Dorsolateral prefrontal cortex (tissue), 120 donors: ENCODE measurements at regions of chr7 and their contacts with region 1.

Region 1: DNA sequence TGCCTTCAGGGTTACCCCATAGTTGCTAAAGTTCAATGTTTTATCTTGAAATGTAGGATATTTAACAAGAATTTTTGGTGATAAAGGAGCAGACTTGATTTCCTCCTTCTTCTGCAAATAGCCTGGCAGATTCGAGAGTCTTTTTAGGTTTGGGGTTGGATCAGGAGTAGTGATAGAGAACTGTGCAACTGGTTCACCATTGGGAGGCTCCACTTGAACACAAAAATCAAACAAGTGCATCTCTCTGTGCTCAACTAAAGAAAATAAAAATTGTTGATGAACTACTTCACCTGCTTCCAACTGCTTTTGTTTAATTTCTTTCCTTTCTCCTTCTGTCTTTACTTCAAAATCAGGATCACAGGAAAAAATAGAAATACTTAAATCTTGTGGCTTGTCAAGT is 58.5 kb downstream of the MACC1 start:
- DNase-seq: no peak
- H3K4me3 ChIP-seq: no peak overlapping the region
- H3K27ac ChIP-seq: no peak overlapping the region
- H3K27me3 ChIP-seq: no peaks in the 10 kb centered on the region
- CTCF ChIP-seq: peak in 54 of 56 donors; percentile 24 to 81 (median 60)

Region 2: DNA sequence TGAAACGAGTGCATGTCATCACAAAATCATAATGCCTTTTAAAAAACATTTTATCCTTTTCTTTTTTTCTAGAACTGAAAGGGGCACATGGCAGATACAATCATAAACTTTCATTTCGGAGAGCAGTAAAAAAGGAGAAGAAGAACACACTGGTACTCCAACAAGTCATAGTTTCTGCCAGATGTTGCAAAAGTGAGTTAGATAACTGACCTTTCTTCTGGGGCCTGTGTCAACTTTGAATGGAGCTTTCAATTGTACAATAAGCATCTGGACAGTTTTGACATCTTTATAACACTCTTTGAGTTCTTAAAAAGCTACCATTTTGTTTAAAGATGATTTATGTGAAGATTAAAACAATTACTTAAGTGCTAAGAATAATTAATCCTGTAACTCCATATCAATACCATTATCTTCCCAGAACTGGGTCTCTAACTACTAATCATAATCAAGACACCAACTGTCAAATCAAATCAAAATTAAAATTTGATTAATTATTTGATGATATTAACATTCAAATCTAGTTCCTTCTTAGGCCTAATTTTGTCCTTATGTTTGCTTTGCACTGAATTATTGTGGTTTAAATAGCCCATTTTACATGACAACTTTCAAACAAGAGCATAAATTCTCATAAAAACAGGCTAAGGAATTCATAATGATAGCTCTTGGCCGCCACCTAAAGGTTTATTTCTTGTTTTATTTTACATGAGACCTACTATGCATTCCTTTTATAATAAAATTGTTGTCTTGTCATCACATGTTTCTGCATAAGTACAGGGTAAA is 152.5 kb after region 1 on chr7:
- intact Hi-C with region 1: loop called in 1 of 2 experiments (anchors 10 kb)
- DNase-seq: no peak
- H3K4me3 ChIP-seq: no peak overlapping the region
- H3K27ac ChIP-seq: no peak overlapping the region
- H3K27me3 ChIP-seq: no peaks in the 10 kb centered on the region
- CTCF ChIP-seq: peak in 54 of 56 donors; percentile 14 to 75 (median 48)

Region 3: GRCh38 chr7:20440472-20441105 is 281.9 kb after region 1 on chr7:
- intact Hi-C with region 1: loop called (anchors 10 kb)
- DNase-seq: peak in 2 of 10 donors; percentile 34 to 44
- H3K4me3 ChIP-seq: no peak overlapping the region
- H3K27ac ChIP-seq: no peak overlapping the region
- H3K27me3 ChIP-seq: peaks cover 0 to 4% (median 0%) of the 10 kb centered on the region in 45 donors
- CTCF ChIP-seq: peak in 46 of 56 donors; percentile 7 to 62 (median 32)

Region 4: GRCh38 chr7:20519645-20520044 is 361.0 kb after region 1 on chr7:
- intact Hi-C with region 1: loop called in 1 of 2 experiments (anchors 5 kb)
- DNase-seq: no peak
- H3K4me3 ChIP-seq: peak overlapping the region in 1 of 59 donors; percentile 29
- H3K27ac ChIP-seq: peak overlapping the region in 18 of 59 donors; percentile 1 to 77 (median 34)
- H3K27me3 ChIP-seq: no peaks in the 10 kb centered on the region
- CTCF ChIP-seq: no peak